ENCODE measurements at regions of chr9 and their contacts with region 1.

Region 1: GRCh38 chr9:88270398-88270797 is 117.8 kb upstream of the SPIN1 start:
- DNase-seq: peak; percentile 29
- H3K4me3 ChIP-seq: no peak overlapping the region
- H3K27ac ChIP-seq: no peak overlapping the region
- H3K4me1 ChIP-seq: no peaks in the 10 kb centered on the region
- H3K27me3 ChIP-seq: no peaks in the 10 kb centered on the region
- CTCF ChIP-seq: no peak

Region 2: GRCh38 chr9:88173378-88173999 is 96.9 kb before region 1 on chr9:
- CTCF ChIA-PET with region 1: interaction called, 11 read pairs
- POLR2A ChIA-PET with region 1: no interaction called
- intact Hi-C with region 1: no loop called
- DNase-seq: peak; percentile 86
- H3K4me3 ChIP-seq: no peak overlapping the region
- H3K27ac ChIP-seq: no peak overlapping the region
- H3K4me1 ChIP-seq: peaks cover 12% of the 10 kb centered on the region
- H3K27me3 ChIP-seq: no peaks in the 10 kb centered on the region
- CTCF ChIP-seq: peak; percentile 85

Region 3: GRCh38 chr9:88280816-88281382 is 10.5 kb after region 1 on chr9:
- CTCF ChIA-PET with region 1: no interaction called
- POLR2A ChIA-PET with region 1: interaction called, 15 read pairs
- intact Hi-C with region 1: no loop called
- DNase-seq: no peak
- H3K4me3 ChIP-seq: no peak overlapping the region
- H3K27ac ChIP-seq: no peak overlapping the region
- H3K4me1 ChIP-seq: no peaks in the 10 kb centered on the region
- H3K27me3 ChIP-seq: no peaks in the 10 kb centered on the region
- CTCF ChIP-seq: no peak

Region 4: DNA sequence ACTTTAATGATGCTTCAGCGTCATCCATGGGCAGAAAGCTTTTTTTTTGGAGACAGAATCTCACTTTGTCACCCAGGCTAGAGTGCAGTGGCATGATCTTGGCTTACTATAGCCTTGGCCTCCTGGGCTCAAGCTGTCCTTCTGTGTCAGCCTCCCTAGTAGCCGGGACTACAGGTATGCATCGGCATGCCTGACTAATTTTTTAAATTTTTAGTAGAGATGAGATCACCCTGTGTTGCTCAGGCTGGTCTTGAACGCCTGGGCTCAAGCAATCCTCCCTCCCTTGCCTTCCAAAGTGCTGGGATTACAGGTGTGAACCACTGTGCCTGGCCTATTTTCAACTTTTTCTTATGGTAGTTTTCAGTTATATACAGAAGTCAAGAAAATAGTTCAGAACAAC is 141.1 kb after region 1 on chr9:
- CTCF ChIA-PET with region 1: no interaction called
- POLR2A ChIA-PET with region 1: no interaction called
- intact Hi-C with region 1: no loop called
- DNase-seq: no peak
- H3K4me3 ChIP-seq: no peak overlapping the region
- H3K27ac ChIP-seq: no peak overlapping the region
- H3K4me1 ChIP-seq: peaks cover under 1% of the 10 kb centered on the region
- H3K27me3 ChIP-seq: no peaks in the 10 kb centered on the region
- CTCF ChIP-seq: no peak

Region 5: GRCh38 chr9:88433583-88434255 is 163.3 kb after region 1 on chr9:
- CTCF ChIA-PET with region 1: no interaction called
- POLR2A ChIA-PET with region 1: no interaction called
- intact Hi-C with region 1: no loop called
- DNase-seq: peak; percentile 49
- H3K4me3 ChIP-seq: no peak overlapping the region
- H3K27ac ChIP-seq: no peak overlapping the region
- H3K4me1 ChIP-seq: peaks cover 2% of the 10 kb centered on the region
- H3K27me3 ChIP-seq: no peaks in the 10 kb centered on the region
- CTCF ChIP-seq: no peak

Region 6: GRCh38 chr9:88680505-88681160 is 410.2 kb after region 1 on chr9:
- CTCF ChIA-PET with region 1: no interaction called
- POLR2A ChIA-PET with region 1: no interaction called
- intact Hi-C with region 1: no loop called
- DNase-seq: no peak
- H3K4me3 ChIP-seq: no peak overlapping the region
- H3K27ac ChIP-seq: no peak overlapping the region
- H3K4me1 ChIP-seq: peaks cover 10% of the 10 kb centered on the region
- H3K27me3 ChIP-seq: no peaks in the 10 kb centered on the region
- CTCF ChIP-seq: no peak